KBM-7 (cell line): ENCODE measurements at regions of chr19 and their contacts with region 1.

Region 1: DNA sequence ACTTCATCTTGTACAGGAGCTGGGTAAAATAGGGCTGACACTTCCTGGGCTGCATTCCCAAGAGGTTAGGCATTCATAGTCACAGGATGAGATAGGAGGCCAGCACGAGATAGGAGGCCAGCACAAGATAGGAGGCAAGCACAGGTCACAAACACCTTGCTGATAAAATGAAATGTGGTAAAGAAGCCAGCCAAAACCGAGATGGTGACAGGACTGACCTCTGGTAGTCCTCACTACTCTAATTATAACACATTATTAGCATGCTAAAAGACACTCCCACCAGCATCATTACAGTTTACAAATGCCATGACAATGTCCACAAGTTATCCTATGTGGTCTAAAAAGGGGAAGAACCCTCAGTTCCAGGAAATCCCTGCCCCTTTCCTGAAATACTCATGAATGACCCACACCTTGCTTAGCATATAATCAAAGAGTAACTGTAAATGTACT is 20.9 kb upstream of the IGSF23 start:
- DNase-seq: peak; percentile 66

Region 2: GRCh38 chr19:44643605-44644401 is 51.3 kb after region 1 on chr19 and contains the start of gene PVR:
- in situ Hi-C with region 1: loop called (anchors 10 kb)
- DNase-seq: peak; percentile 79

Region 3: GRCh38 chr19:45008552-45008951 is 416.1 kb after region 1 on chr19:
- in situ Hi-C with region 1: no loop called
- DNase-seq: no peak